CD4-positive, alpha-beta memory T cell (primary cell): ENCODE measurements at regions of chr3 and their contacts with region 1.

Region 1: GRCh38 chr3:45167011-45167911 is 21.1 kb upstream of the CDCP1 start:
- DNase-seq: peak; percentile 71 to 90 (median 77)
- H3K4me3 ChIP-seq: peak overlapping the region; percentile 8 to 21
- H3K4me3 Mint-ChIP-seq: peak overlapping the region; percentile 67 to 91 (median 82)
- H3K27ac ChIP-seq: peak overlapping the region; percentile 39
- H3K27ac Mint-ChIP-seq: peak overlapping the region; percentile 78 to 99 (median 95)
- H3K4me1 ChIP-seq: peaks cover 24% of the 10 kb centered on the region
- H3K4me1 Mint-ChIP-seq: peaks cover 15 to 35% (median 22%) of the 10 kb centered on the region in 4 donors
- H3K27me3 ChIP-seq: no peaks in the 10 kb centered on the region
- H3K27me3 Mint-ChIP-seq: peaks cover 0 to 2% of the 10 kb centered on the region in 2 donors

Region 2: GRCh38 chr3:45105855-45106671 is 61.2 kb before region 1 on chr3:
- CTCF ChIA-PET with region 1: no interaction called
- POLR2A ChIA-PET with region 1: interaction called, 4 read pairs
- intact Hi-C with region 1: loop called (anchors 1 kb)
- DNase-seq: peak; percentile 71 to 78 (median 75)
- H3K4me3 ChIP-seq: no peak overlapping the region
- H3K4me3 Mint-ChIP-seq: peak overlapping the region; percentile 9 to 74 (median 60)
- H3K27ac ChIP-seq: no peak overlapping the region
- H3K27ac Mint-ChIP-seq: peak overlapping the region; percentile 19 to 88 (median 73)
- H3K4me1 ChIP-seq: peaks cover 70% of the 10 kb centered on the region
- H3K4me1 Mint-ChIP-seq: peaks cover 50 to 75% (median 65%) of the 10 kb centered on the region in 4 donors
- H3K27me3 ChIP-seq: peaks cover 2% of the 10 kb centered on the region
- H3K27me3 Mint-ChIP-seq: peaks cover 5% of the 10 kb centered on the region in 2 donors

Region 3: DNA sequence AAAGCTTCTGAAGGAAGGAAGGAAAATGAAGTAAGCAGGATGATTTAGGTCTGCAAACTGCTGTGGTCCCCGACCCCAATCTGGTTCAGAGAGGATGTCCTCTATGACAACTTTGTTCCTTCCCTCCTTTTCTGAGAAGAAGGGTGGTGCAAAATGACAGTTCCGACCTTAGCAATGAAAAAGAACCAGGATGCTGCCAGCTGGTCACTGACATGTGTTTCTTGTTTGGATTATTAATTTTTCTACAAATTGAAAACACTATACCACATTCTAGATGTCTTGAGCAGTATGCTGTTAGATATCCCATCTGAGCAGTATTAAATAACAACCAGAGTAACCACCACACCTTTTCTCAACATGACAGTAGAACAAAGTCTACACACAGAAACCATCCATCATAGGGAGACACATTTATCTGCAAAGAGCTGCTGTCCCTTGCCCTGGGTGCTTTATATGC is 48.6 kb before region 1 on chr3:
- CTCF ChIA-PET with region 1: interaction called, 3 read pairs
- POLR2A ChIA-PET with region 1: interaction called, 3 read pairs
- intact Hi-C with region 1: loop called (anchors 1 kb)
- DNase-seq: no peak
- H3K4me3 ChIP-seq: no peak overlapping the region
- H3K4me3 Mint-ChIP-seq: peak overlapping the region in 1 of 8 donors; percentile 64
- H3K27ac ChIP-seq: no peak overlapping the region
- H3K27ac Mint-ChIP-seq: peak overlapping the region in 2 of 7 donors; percentile 33 to 77
- H3K4me1 ChIP-seq: peaks cover 18% of the 10 kb centered on the region
- H3K4me1 Mint-ChIP-seq: peaks cover 12 to 22% (median 20%) of the 10 kb centered on the region in 4 donors
- H3K27me3 ChIP-seq: no peaks in the 10 kb centered on the region
- H3K27me3 Mint-ChIP-seq: peaks cover 0 to 2% of the 10 kb centered on the region in 2 donors